Testis (tissue), 5 donors: ENCODE measurements at regions of chr1 and their contacts with region 1.

Region 1: GRCh38 chr1:155167166-155168104 is 5.7 kb downstream of the KRTCAP2 start:
- DNase-seq: peak; percentile 93
- H3K4me3 ChIP-seq: no peak overlapping the region
- H3K27ac ChIP-seq: peak overlapping the region in 1 of 2 donors; percentile 45
- H3K4me1 ChIP-seq: peaks cover 26% of the 10 kb centered on the region
- H3K27me3 ChIP-seq: no peaks in the 10 kb centered on the region
- CTCF ChIP-seq: peak; percentile 90 to 91 (median 90)
- POLR2A ChIP-seq: no peak

Region 2: GRCh38 chr1:154974063-154974807 is 193.2 kb before region 1 on chr1 and contains the start of gene CKS1B:
- intact Hi-C with region 1: no loop called
- DNase-seq: peak; percentile 99
- H3K4me3 ChIP-seq: peak within 1 kb of the TSS; percentile 78 to 86
- H3K27ac ChIP-seq: peak within 1 kb of the TSS; percentile 98 to 99
- H3K4me1 ChIP-seq: peaks cover 46% of the 10 kb centered on the region
- H3K27me3 ChIP-seq: no peaks in the 10 kb centered on the region
- CTCF ChIP-seq: no peak
- POLR2A ChIP-seq: peak; percentile 9
- total RNA-seq, gene CKS1B: 45.5 to 84.3 TPM

Region 3: GRCh38 chr1:155091071-155091709 is 76.2 kb before region 1 on chr1:
- intact Hi-C with region 1: loop called (anchors 5 kb)
- DNase-seq: peak; percentile 86
- H3K4me3 ChIP-seq: no peak overlapping the region
- H3K27ac ChIP-seq: no peak overlapping the region
- H3K4me1 ChIP-seq: peaks cover 15% of the 10 kb centered on the region
- H3K27me3 ChIP-seq: no peaks in the 10 kb centered on the region
- CTCF ChIP-seq: peak; percentile 94 to 99 (median 98)
- POLR2A ChIP-seq: no peak

Region 4: DNA sequence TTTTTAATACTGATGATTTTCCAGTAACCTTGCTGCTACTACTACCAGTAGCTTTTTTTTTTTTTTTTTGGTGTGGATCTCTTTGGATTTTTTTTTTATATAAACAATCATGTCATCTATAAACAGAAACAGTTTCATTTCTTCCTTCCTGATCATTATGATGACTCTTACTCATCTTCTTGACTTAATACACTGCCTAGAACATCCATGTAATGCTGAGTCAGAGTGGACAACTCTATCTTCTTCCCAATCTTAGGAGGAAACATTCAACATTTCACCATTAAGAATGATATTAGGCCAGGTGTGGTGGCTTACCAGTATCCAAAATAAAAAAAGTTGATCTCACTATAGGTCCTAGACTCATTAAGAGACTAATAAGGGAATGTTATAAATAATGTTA is 222.4 kb after region 1 on chr1:
- intact Hi-C with region 1: no loop called
- DNase-seq: no peak
- H3K4me3 ChIP-seq: no peak overlapping the region
- H3K27ac ChIP-seq: no peak overlapping the region
- H3K4me1 ChIP-seq: no peaks in the 10 kb centered on the region
- H3K27me3 ChIP-seq: no peaks in the 10 kb centered on the region
- CTCF ChIP-seq: no peak
- POLR2A ChIP-seq: no peak

Region 5: DNA sequence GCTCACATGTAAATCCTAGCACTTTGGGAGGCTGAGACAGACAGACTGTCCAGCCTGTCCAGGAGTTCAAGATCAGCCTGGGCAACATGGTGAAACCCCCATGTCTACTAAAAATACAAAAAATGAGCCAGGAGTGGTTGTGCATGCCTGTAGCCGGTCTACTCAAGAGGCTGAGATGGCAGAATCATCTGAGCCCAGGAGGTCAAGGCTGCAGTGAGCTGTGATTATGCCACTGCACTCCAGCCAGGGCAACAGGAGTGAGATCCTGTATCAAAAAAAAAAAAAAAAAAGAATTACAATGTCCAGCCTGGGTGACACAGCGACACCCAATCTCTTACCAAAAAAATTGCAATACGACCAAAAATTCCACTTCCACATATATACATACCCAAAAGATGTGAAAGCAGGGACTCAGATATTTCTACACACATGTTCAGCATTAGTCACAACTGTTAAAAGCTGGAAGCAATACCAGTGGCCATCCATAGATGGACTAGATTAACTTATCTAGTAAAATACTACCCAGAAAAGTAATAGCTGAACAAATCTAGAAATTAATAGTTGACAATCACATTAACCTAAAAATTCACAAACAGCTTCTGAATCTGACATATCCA is 346.0 kb after region 1 on chr1:
- intact Hi-C with region 1: no loop called
- DNase-seq: no peak
- H3K4me3 ChIP-seq: no peak overlapping the region
- H3K27ac ChIP-seq: no peak overlapping the region
- H3K4me1 ChIP-seq: peaks cover 2% of the 10 kb centered on the region
- H3K27me3 ChIP-seq: no peaks in the 10 kb centered on the region
- CTCF ChIP-seq: no peak
- POLR2A ChIP-seq: no peak

Region 6: GRCh38 chr1:155527677-155528076 is 360.2 kb after region 1 on chr1:
- intact Hi-C with region 1: no loop called
- DNase-seq: no peak
- H3K4me3 ChIP-seq: no peak overlapping the region
- H3K27ac ChIP-seq: no peak overlapping the region
- H3K4me1 ChIP-seq: peaks cover 10% of the 10 kb centered on the region
- H3K27me3 ChIP-seq: no peaks in the 10 kb centered on the region
- CTCF ChIP-seq: no peak
- POLR2A ChIP-seq: no peak